PC-9 (cell line): ENCODE measurements at regions of chr17 and their contacts with region 1.

Region 1: GRCh38 chr17:48457080-48457836 is 27.2 kb upstream of the SKAP1 start:
- DNase-seq: peak; percentile 44 to 51
- H3K4me3 ChIP-seq: peak overlapping the region; percentile 27; the same call in 1 of the 2 replicates
- H3K27ac ChIP-seq: no peak overlapping the region
- H3K4me1 ChIP-seq: 0 out of 2 replicates have a peak, but pooled peaks cover 11% of the 10 kb centered on the region
- H3K27me3 ChIP-seq: no peaks in the 10 kb centered on the region
- CTCF ChIP-seq: peak; percentile 98

Region 2: DNA sequence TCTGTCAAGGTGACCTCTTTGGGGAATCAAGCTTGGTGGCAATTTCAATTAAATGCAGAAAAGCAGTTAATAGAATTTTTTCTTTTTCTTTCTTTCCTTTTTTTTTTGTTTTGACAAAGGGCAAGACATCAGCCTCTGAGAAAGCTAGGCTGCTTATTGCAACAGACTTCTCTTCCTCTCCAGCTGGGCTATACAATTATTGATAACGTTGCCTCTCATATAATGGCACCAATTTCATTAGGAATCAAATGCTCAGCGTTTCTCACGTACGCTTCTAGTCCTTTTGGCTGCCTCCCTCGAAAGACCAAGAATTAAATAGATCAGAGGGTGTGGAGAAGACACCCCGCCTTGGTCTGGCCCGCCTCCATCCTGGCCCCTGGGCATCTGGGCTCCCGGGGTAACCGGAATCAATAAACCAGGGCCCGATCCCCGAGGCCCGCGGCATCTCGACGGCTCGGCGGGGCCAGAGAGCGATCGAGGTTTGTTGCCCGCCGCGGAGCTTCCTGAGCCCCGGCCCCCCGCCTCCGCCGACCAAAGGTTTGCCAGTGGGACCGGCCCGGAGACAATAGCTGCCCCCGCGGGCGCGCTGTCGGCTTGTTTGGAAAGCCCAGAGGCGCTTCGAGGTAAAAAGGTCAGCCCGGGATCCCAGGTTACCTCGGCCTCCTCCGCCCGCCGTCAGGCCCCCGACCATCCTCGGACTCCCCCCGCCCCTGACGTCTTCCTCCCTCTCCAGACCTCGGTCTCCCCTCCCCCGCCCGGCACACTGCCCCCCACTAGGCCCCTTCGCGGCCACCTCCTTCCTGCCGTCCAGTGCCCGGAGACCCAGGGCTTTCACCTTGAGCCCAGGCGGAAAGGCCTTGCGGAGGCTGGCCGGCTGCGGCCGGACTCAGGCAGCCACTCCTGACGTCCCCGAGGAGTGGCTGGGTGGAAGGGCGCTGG is 69.6 kb after region 1 on chr17:
- CTCF ChIA-PET with region 1: no interaction called
- POLR2A ChIA-PET with region 1: no interaction called
- intact Hi-C with region 1: loop called (anchors 2 kb)
- DNase-seq: no peak
- H3K4me3 ChIP-seq: no peak overlapping the region
- H3K27ac ChIP-seq: no peak overlapping the region
- H3K4me1 ChIP-seq: peaks cover 14% of the 10 kb centered on the region
- H3K27me3 ChIP-seq: no peaks in the 10 kb centered on the region
- CTCF ChIP-seq: no peak

Region 3: DNA sequence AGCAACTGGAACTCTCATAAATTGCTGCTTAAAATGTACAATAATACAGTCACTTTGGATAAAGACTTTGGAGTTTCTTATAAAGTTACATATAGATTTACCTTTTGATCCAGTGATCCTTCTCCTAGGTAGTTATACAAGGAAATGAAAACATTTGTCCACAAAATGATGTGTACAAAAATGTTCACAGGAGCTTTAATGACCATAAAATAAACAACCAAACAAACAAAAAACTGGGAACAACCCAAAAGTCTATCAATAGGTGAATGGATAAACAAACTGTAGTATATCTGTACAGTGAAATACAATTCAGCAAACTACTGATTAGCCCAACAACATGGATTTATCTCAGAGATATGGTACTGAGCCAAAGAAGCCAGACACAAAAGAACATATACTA is 322.2 kb after region 1 on chr17:
- CTCF ChIA-PET with region 1: no interaction called
- POLR2A ChIA-PET with region 1: interaction called, 12 read pairs
- intact Hi-C with region 1: no loop called
- DNase-seq: no peak
- H3K4me3 ChIP-seq: no peak overlapping the region
- H3K27ac ChIP-seq: no peak overlapping the region
- H3K4me1 ChIP-seq: no peaks in the 10 kb centered on the region
- H3K27me3 ChIP-seq: peaks cover 28% of the 10 kb centered on the region
- CTCF ChIP-seq: no peak